GM12878 (cell line): ENCODE measurements at regions of chr6 and their contacts with region 1.

Region 1: GRCh38 chr6:144149891-144150709 is at the start of gene STX11:
- DNase-seq: peak; percentile 57
- ATAC-seq: peak; percentile 80
- H3K4me3 ChIP-seq: peak within 1 kb of the TSS; percentile 74
- H3K27ac ChIP-seq: peak within 1 kb of the TSS; percentile 98
- H3K4me1 ChIP-seq: peaks cover 18% of the 10 kb centered on the region
- H3K27me3 ChIP-seq: no peaks in the 10 kb centered on the region
- CTCF ChIP-seq: no peak
- EP300 ChIP-seq: peak in 1 of 2 experiments; percentile 55; a peak in 2 of 4 replicates
- POLR2A ChIP-seq: peak; percentile 91
- RAD21 ChIP-seq: no peak
- polyA plus RNA-seq, gene STX11: 0.66 to 2.3 TPM

Region 2: GRCh38 chr6:144063744-144064401 is 86.2 kb before region 1 on chr6:
- CTCF ChIA-PET with region 1: no interaction called
- POLR2A ChIA-PET with region 1: interaction called, 5 read pairs
- RAD21 ChIA-PET with region 1: interaction called, 6 read pairs
- SMC1A ChIA-PET with region 1: interaction called, 9 read pairs
- in situ Hi-C with region 1: no loop called
- intact Hi-C with region 1: loop called (anchors 1 kb)
- DNase-seq: peak; percentile 59
- ATAC-seq: peak; percentile 90
- H3K4me3 ChIP-seq: peak overlapping the region; percentile 85
- H3K27ac ChIP-seq: peak overlapping the region; percentile 94
- H3K4me1 ChIP-seq: peaks cover 10% of the 10 kb centered on the region
- H3K27me3 ChIP-seq: no peaks in the 10 kb centered on the region
- CTCF ChIP-seq: peak; percentile 13 to 41 (median 16); a peak in 3 of 6 replicates
- EP300 ChIP-seq: no peak
- POLR2A ChIP-seq: peak; percentile 97
- RAD21 ChIP-seq: no peak

Region 3: GRCh38 chr6:144095331-144096002 is 54.6 kb before region 1 on chr6 and contains the start of gene SF3B5:
- CTCF ChIA-PET with region 1: no interaction called
- POLR2A ChIA-PET with region 1: interaction called, 4 read pairs
- RAD21 ChIA-PET with region 1: no interaction called
- SMC1A ChIA-PET with region 1: interaction called, 6 read pairs
- in situ Hi-C with region 1: no loop called
- intact Hi-C with region 1: loop called (anchors 1 kb)
- DNase-seq: peak; percentile 99
- ATAC-seq: peak; percentile 96
- H3K4me3 ChIP-seq: peak within 1 kb of the TSS; percentile 92
- H3K27ac ChIP-seq: peak within 1 kb of the TSS; percentile 81
- H3K4me1 ChIP-seq: peaks cover 15% of the 10 kb centered on the region
- H3K27me3 ChIP-seq: no peaks in the 10 kb centered on the region
- CTCF ChIP-seq: no peak
- EP300 ChIP-seq: no peak
- POLR2A ChIP-seq: peak; percentile 99
- RAD21 ChIP-seq: no peak
- polyA plus RNA-seq, gene SF3B5: 700 to 864 TPM

Region 4: GRCh38 chr6:144104898-144105487 is 45.1 kb before region 1 on chr6:
- CTCF ChIA-PET with region 1: interaction called, 5 read pairs
- POLR2A ChIA-PET with region 1: interaction called, 3 read pairs
- RAD21 ChIA-PET with region 1: interaction called, 3 read pairs
- SMC1A ChIA-PET with region 1: interaction called, 11 read pairs
- in situ Hi-C with region 1: no loop called
- intact Hi-C with region 1: loop called (anchors 1 kb)
- DNase-seq: peak; percentile 53
- ATAC-seq: peak; percentile 97
- H3K4me3 ChIP-seq: no peak overlapping the region
- H3K27ac ChIP-seq: no peak overlapping the region
- H3K4me1 ChIP-seq: no peaks in the 10 kb centered on the region
- H3K27me3 ChIP-seq: no peaks in the 10 kb centered on the region
- CTCF ChIP-seq: peak; percentile 59 to 89 (median 72)
- EP300 ChIP-seq: no peak
- POLR2A ChIP-seq: no peak
- RAD21 ChIP-seq: peak; percentile 99

Region 5: DNA sequence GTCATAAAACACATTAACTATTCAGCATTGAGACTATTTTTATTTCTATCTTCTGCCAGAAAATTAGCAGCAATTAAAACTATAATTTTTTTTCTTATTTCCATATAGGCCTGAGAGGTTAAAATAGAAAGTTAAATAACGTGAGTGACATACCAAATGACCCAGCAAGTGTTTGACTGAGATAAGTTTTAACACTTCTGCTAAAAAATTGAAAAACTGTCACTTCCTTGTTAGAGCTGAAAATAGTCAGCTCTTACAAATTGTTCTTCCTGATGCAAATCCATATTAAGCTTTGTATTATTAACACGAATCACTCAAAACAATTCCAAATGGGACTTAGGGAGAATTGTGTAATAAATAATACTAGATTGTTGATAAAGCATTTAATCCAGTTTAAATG is 26.3 kb before region 1 on chr6:
- CTCF ChIA-PET with region 1: interaction called, 5 read pairs
- POLR2A ChIA-PET with region 1: interaction called, 10 read pairs
- RAD21 ChIA-PET with region 1: interaction called, 10 read pairs
- SMC1A ChIA-PET with region 1: interaction called, 5 read pairs
- in situ Hi-C with region 1: no loop called
- intact Hi-C with region 1: no loop called
- DNase-seq: no peak
- ATAC-seq: no peak
- H3K4me3 ChIP-seq: no peak overlapping the region
- H3K27ac ChIP-seq: no peak overlapping the region
- H3K4me1 ChIP-seq: no peaks in the 10 kb centered on the region
- H3K27me3 ChIP-seq: no peaks in the 10 kb centered on the region
- CTCF ChIP-seq: no peak
- EP300 ChIP-seq: no peak
- POLR2A ChIP-seq: no peak
- RAD21 ChIP-seq: no peak

Region 6: DNA sequence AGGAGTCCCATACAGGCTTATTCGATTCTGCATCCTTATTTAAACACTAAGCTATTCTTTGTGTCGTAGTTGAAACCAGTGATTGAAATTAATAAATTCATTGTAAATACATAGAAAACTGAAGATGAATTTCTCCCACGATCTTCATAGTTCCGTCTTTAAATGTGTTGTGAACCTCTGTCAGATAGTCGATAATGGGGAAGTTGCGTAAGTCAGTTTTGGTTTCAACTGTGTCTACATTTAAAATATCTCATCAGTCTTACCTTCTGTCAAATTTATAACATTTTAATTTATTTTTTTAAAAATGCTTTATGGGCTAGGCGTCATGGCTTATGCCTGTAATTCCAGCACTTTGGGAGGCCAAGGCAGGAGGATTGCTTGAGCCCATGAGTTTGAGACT is 12.9 kb after region 1 on chr6:
- CTCF ChIA-PET with region 1: interaction called, 9 read pairs
- POLR2A ChIA-PET with region 1: interaction called, 13 read pairs
- RAD21 ChIA-PET with region 1: interaction called, 17 read pairs
- SMC1A ChIA-PET with region 1: interaction called, 19 read pairs
- in situ Hi-C with region 1: no loop called
- intact Hi-C with region 1: no loop called
- DNase-seq: no peak
- ATAC-seq: peak; percentile 87
- H3K4me3 ChIP-seq: peak overlapping the region; percentile 19; the same call in 1 of the 2 replicates
- H3K27ac ChIP-seq: peak overlapping the region; percentile 75
- H3K4me1 ChIP-seq: peaks cover 6% of the 10 kb centered on the region; the same call in 1 of the 2 replicates
- H3K27me3 ChIP-seq: no peaks in the 10 kb centered on the region
- CTCF ChIP-seq: no peak
- EP300 ChIP-seq: no peak; a peak in 1 of 4 replicates
- POLR2A ChIP-seq: no peak
- RAD21 ChIP-seq: no peak

Region 7: GRCh38 chr6:144349690-144350527 is 199.8 kb after region 1 on chr6:
- CTCF ChIA-PET with region 1: no interaction called
- POLR2A ChIA-PET with region 1: interaction called, 4 read pairs
- RAD21 ChIA-PET with region 1: no interaction called
- SMC1A ChIA-PET with region 1: interaction called, 3 read pairs
- in situ Hi-C with region 1: no loop called
- intact Hi-C with region 1: loop called (anchors 5 kb)
- DNase-seq: peak; percentile 60
- ATAC-seq: peak; percentile 44
- H3K4me3 ChIP-seq: peak overlapping the region; percentile 60
- H3K27ac ChIP-seq: peak overlapping the region; percentile 88
- H3K4me1 ChIP-seq: peaks cover 55% of the 10 kb centered on the region
- H3K27me3 ChIP-seq: no peaks in the 10 kb centered on the region
- CTCF ChIP-seq: no peak
- EP300 ChIP-seq: peak in 1 of 2 experiments; percentile 25; a peak in 1 of 4 replicates
- POLR2A ChIP-seq: no peak; the same call in 1 of the 2 replicates
- RAD21 ChIP-seq: no peak

Region 8: DNA sequence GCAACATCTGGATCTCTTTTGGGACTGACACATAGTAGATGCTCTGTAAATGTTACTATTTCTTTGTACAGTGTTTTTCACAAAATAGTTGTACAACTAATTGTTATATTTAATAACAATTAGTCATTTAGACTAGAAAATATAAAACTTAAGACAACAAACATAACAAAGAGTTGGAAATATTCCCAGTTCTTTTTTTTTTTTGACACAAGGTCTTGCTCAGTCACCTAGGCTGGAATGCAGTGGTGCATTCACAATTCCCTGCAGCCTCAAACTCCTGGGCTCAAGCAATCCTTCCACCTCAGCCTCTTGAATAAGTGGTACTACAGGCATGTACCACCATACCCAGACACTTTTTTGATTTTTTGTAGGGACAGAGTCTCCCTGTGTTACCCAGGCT is 240.8 kb after region 1 on chr6:
- CTCF ChIA-PET with region 1: no interaction called
- POLR2A ChIA-PET with region 1: no interaction called
- RAD21 ChIA-PET with region 1: no interaction called
- SMC1A ChIA-PET with region 1: no interaction called
- in situ Hi-C with region 1: no loop called
- intact Hi-C with region 1: no loop called
- DNase-seq: no peak
- ATAC-seq: no peak
- H3K4me3 ChIP-seq: no peak overlapping the region
- H3K27ac ChIP-seq: no peak overlapping the region
- H3K4me1 ChIP-seq: no peaks in the 10 kb centered on the region
- H3K27me3 ChIP-seq: no peaks in the 10 kb centered on the region
- CTCF ChIP-seq: no peak
- EP300 ChIP-seq: no peak
- POLR2A ChIP-seq: no peak
- RAD21 ChIP-seq: no peak

Region 9: DNA sequence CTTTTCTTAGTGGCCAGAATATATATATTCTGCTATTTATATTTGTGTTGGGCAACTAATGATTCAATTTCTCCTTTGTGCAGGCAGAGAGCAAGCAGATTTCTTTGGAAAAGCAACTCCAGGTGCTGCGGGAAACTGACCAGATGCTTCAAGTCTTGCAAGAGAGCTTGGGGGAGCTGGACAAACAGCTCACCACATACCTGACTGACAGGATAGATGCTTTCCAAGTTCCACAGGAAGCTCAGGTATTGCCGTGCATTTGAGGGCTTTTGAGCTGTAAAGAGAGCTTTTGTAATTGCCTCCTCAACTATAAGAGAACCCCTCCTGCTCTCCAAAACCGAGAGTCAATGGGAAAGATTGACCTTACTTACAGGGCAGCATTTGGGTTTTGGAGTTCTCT is 338.5 kb after region 1 on chr6:
- CTCF ChIA-PET with region 1: no interaction called
- POLR2A ChIA-PET with region 1: no interaction called
- RAD21 ChIA-PET with region 1: no interaction called
- SMC1A ChIA-PET with region 1: no interaction called
- in situ Hi-C with region 1: no loop called
- intact Hi-C with region 1: no loop called
- DNase-seq: no peak
- ATAC-seq: no peak
- H3K4me3 ChIP-seq: no peak overlapping the region
- H3K27ac ChIP-seq: no peak overlapping the region
- H3K4me1 ChIP-seq: no peaks in the 10 kb centered on the region
- H3K27me3 ChIP-seq: no peaks in the 10 kb centered on the region
- CTCF ChIP-seq: no peak
- EP300 ChIP-seq: no peak
- POLR2A ChIP-seq: no peak
- RAD21 ChIP-seq: no peak

Region 10: GRCh38 chr6:144931172-144932035 is 781.3 kb after region 1 on chr6:
- CTCF ChIA-PET with region 1: no interaction called
- POLR2A ChIA-PET with region 1: no interaction called
- RAD21 ChIA-PET with region 1: no interaction called
- SMC1A ChIA-PET with region 1: no interaction called
- in situ Hi-C with region 1: no loop called
- intact Hi-C with region 1: no loop called
- DNase-seq: no peak
- ATAC-seq: peak; percentile 78
- H3K4me3 ChIP-seq: no peak overlapping the region
- H3K27ac ChIP-seq: no peak overlapping the region
- H3K4me1 ChIP-seq: no peaks in the 10 kb centered on the region
- H3K27me3 ChIP-seq: no peaks in the 10 kb centered on the region; a peak in 1 of 4 replicates
- CTCF ChIP-seq: peak; percentile 49 to 57 (median 53); a peak in 5 of 6 replicates
- EP300 ChIP-seq: no peak
- POLR2A ChIP-seq: no peak
- RAD21 ChIP-seq: peak; percentile 56